RWPE1 (cell line): ENCODE measurements at regions of chr19 and their contacts with region 1.

Region 1: DNA sequence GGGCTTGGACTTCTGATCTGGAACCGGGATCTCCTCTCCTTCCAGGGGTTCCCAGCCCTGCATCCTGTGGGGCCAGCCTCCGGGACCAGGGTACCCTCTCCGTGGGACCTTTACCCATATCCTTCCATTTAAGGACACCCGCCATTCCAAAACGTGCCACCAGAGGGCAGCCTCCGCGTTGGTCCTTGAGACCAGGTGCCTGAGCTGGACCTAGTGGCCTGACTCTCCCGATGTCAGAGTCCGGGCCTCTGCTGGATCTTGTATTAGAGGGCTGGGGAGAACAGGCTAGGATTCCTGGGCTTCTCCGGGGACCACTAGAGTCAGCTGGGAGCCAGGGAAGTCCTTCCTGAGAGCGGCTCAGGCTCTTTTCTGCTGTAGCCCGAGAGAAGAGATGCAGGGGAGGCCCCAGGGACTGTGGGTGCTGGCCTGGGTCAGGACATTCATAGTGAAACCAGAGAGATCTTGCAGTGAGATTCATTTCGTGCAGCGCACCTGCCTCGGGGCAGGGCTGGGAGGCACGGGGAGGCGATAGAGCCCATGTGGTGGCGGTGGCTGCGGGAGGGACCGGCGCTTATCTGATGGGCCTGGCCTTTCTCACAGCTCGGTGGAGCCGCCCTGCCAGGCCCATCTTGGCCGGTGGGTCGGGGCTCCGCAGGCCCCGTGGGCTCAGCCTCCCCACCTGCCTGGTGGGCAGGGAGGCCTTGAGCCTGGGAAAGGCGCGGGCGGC is 9.8 kb upstream of the SLC7A10 start:
- DNase-seq: peak; percentile 67
- H3K27ac ChIP-seq: no peak overlapping the region
- CTCF ChIP-seq: peak; percentile 91

Region 2: GRCh38 chr19:33385956-33386355 is 150.5 kb after region 1 on chr19:
- CTCF ChIA-PET with region 1: interaction called, 11 read pairs
- POLR2A ChIA-PET with region 1: no interaction called
- DNase-seq: no peak
- H3K27ac ChIP-seq: peak overlapping the region; percentile 74
- CTCF ChIP-seq: no peak

Region 3: GRCh38 chr19:33406521-33407139 is 171.2 kb after region 1 on chr19:
- CTCF ChIA-PET with region 1: interaction called, 50 read pairs
- POLR2A ChIA-PET with region 1: no interaction called
- DNase-seq: peak; percentile 66
- H3K27ac ChIP-seq: no peak overlapping the region
- CTCF ChIP-seq: peak; percentile 89

Region 4: GRCh38 chr19:33416307-33417215 is 181.1 kb after region 1 on chr19:
- CTCF ChIA-PET with region 1: interaction called, 10 read pairs
- POLR2A ChIA-PET with region 1: no interaction called
- DNase-seq: peak; percentile 74
- H3K27ac ChIP-seq: no peak overlapping the region
- CTCF ChIP-seq: peak; percentile 67